ENCODE measurements at regions of chr12 and their contacts with region 1.

Region 1: GRCh38 chr12:130335517-130336392 is 1.9 kb upstream of the PIWIL1 start:
- DNase-seq: peak; percentile 68
- H3K4me3 ChIP-seq: no peak overlapping the region
- H3K27ac ChIP-seq: no peak overlapping the region
- H3K4me1 ChIP-seq: no peaks in the 10 kb centered on the region
- H3K27me3 ChIP-seq: peaks cover 31% of the 10 kb centered on the region
- CTCF ChIP-seq: peak; percentile 76

Region 2: GRCh38 chr12:130031571-130032189 is 304.1 kb before region 1 on chr12:
- CTCF ChIA-PET with region 1: no interaction called
- POLR2A ChIA-PET with region 1: no interaction called
- intact Hi-C with region 1: loop called (anchors 5 kb)
- DNase-seq: peak; percentile 56
- H3K4me3 ChIP-seq: no peak overlapping the region
- H3K27ac ChIP-seq: no peak overlapping the region
- H3K4me1 ChIP-seq: no peaks in the 10 kb centered on the region
- H3K27me3 ChIP-seq: peaks cover 41% of the 10 kb centered on the region
- CTCF ChIP-seq: peak; percentile 97

Region 3: DNA sequence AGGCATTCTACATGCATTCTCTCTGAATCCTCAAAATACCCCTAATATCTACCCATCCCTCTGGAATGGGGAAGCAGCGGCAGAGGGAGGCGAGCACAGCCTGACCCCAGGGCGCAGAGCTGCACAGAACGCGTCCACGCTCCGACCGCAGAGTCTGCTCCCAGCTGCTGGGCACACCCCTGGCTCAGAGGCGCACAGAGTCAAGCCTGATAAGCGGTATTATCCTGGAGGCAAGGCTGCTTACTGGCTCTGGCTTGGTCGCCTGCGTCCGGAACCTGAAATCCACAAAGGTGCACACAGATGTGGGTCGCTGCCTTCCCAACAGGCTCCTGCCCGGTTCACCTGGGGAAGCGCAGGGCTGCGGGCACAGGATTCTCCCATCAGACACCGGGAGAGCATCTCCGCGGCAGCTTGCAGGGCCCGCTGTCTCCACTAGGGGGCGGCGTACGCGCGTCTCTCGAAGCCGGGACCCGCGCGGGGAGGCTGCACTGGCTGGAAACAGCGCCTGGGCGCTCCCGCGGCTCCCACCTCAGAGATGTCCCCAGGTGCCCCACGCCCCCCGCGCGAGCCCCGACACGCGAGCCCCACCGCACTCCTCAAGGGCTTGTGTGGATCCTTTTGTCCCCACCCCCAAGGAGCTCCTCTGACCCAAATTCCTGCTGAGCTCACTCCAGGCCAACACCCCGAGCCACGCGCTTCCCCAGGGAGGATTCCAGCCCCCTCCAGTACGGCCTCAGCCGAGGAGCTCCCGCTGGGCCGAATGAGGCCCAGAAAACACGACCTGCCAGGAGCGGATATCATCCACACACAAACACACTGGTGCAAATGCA is 293.6 kb before region 1 on chr12:
- CTCF ChIA-PET with region 1: no interaction called
- POLR2A ChIA-PET with region 1: no interaction called
- intact Hi-C with region 1: loop called (anchors 1 kb)
- DNase-seq: no peak
- H3K4me3 ChIP-seq: no peak overlapping the region
- H3K27ac ChIP-seq: no peak overlapping the region
- H3K4me1 ChIP-seq: no peaks in the 10 kb centered on the region
- H3K27me3 ChIP-seq: peaks cover 24% of the 10 kb centered on the region
- CTCF ChIP-seq: peak; percentile 55

Region 4: GRCh38 chr12:130198026-130198662 is 137.6 kb before region 1 on chr12:
- CTCF ChIA-PET with region 1: no interaction called
- POLR2A ChIA-PET with region 1: no interaction called
- intact Hi-C with region 1: no loop called
- DNase-seq: no peak
- H3K4me3 ChIP-seq: no peak overlapping the region
- H3K27ac ChIP-seq: no peak overlapping the region
- H3K4me1 ChIP-seq: no peaks in the 10 kb centered on the region
- H3K27me3 ChIP-seq: no peaks in the 10 kb centered on the region
- CTCF ChIP-seq: no peak

Measured in A673 (cell line).